Activated CD4-positive, alpha-beta memory T cell treated with anti-CD3 and anti-CD28 coated beads for 36 hours (primary cell): ENCODE measurements at regions of chr4 and their contacts with region 1.

Region 1: DNA sequence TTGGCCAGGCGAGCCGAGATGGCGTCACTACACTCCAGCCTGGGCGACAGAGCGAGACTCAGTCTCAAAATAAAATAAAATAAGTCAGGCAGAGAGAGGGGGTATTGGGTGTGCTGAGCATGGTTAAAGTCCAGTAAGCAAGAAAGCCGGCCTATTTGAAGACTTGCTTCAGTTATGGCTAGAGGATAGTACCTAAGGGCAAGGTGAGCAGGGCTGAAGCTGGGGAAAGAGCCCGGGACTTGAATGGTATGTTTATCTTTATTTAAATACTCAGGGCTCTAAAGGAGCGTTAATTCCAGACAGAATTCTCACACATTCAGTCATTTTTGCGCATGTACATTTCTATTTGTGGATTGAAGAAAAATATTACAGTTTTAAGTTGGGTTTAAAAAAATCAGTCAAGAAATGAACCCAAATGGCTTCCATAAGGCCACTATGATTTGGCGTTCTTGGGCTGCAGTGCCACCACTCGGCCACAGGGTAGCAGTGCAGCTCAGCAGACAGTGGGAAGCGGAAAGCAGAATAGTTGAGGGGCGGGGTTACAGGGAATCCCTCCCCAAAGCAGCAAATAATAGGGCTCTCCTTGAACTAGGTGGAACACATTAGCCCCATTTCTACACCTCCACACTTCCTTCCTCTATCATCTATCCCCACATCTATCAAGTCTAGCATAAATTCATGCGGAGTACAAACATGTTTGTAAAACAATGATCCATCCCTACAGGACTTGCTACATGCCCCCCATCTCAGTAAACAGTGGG is 37.2 kb upstream of the SH3D19 start:
- DNase-seq: peak; percentile 86
- H3K4me3 Mint-ChIP-seq: no peak overlapping the region
- H3K27ac Mint-ChIP-seq: no peak overlapping the region
- H3K4me1 Mint-ChIP-seq: peaks cover 2% of the 10 kb centered on the region
- H3K27me3 Mint-ChIP-seq: no peaks in the 10 kb centered on the region

Region 2: GRCh38 chr4:151276787-151277562 is 85.6 kb before region 1 on chr4 and contains the start of gene PRSS48:
- CTCF ChIA-PET with region 1: interaction called, 6 read pairs
- POLR2A ChIA-PET with region 1: no interaction called
- intact Hi-C with region 1: loop called (anchors 2 kb)
- DNase-seq: peak; percentile 67
- H3K4me3 Mint-ChIP-seq: no peak within 1 kb of the TSS
- H3K27ac Mint-ChIP-seq: no peak within 1 kb of the TSS
- H3K4me1 Mint-ChIP-seq: no peaks in the 10 kb centered on the region
- H3K27me3 Mint-ChIP-seq: peaks cover 1% of the 10 kb centered on the region
- total RNA-seq, gene PRSS48: not detected

Region 3: GRCh38 chr4:151347490-151348235 is 14.9 kb before region 1 on chr4:
- CTCF ChIA-PET with region 1: no interaction called
- POLR2A ChIA-PET with region 1: no interaction called
- intact Hi-C with region 1: no loop called
- DNase-seq: no peak
- H3K4me3 Mint-ChIP-seq: no peak overlapping the region
- H3K27ac Mint-ChIP-seq: no peak overlapping the region
- H3K4me1 Mint-ChIP-seq: no peaks in the 10 kb centered on the region
- H3K27me3 Mint-ChIP-seq: peaks cover 1% of the 10 kb centered on the region

Region 4: DNA sequence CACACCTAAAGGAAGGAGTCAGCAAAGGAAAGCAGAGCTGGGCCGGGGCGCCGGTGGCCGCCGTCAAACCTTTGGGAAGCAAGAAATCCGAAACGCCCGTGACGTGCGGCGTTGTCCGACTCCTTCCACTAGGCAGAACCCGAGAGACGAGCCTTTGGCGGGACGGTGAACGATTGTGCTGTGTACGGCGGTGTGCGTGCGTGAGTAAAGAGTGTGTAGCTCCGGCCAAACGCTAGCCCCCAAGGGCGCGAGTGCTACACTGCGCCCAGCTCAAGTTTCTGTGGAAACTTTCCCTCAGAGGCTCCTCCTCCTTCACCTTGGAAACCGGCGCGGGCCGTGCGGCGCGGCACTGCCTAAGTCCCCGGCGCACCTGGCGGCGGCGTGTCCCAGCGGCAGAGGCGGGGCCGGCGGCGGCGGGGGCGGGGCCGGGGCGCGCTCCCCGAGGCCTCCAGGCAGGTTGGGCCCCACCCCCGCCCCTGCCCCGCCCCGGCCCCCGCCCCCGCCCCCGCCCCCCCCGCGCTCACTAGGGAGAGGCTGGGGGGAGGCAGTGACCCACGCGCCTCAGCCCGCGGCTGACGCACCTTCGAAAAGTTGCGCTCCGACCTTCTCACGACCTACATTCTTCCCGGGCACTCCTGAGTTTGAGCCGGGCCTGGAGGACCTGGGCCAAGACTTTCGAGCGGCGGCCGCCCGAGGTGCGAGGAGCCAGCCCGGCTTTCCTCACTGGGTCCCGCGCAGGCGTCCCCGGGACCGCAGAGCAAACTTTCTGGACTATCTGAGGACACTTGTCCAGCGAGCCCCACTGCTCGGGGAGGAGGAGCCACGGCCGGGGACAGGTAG is 46.3 kb after region 1 on chr4 and contains the start of gene FHIP1A:
- CTCF ChIA-PET with region 1: interaction called, 3 read pairs
- POLR2A ChIA-PET with region 1: no interaction called
- intact Hi-C with region 1: loop called (anchors 1 kb)
- DNase-seq: peak; percentile 88
- H3K4me3 Mint-ChIP-seq: peak within 1 kb of the TSS; percentile 86
- H3K27ac Mint-ChIP-seq: peak within 1 kb of the TSS; percentile 65
- H3K4me1 Mint-ChIP-seq: peaks cover 22% of the 10 kb centered on the region
- H3K27me3 Mint-ChIP-seq: peaks cover 15% of the 10 kb centered on the region
- total RNA-seq, gene FHIP1A: 0.45 to 0.46 TPM